AG04449 (cell line): ENCODE measurements at regions of chr11 and their contacts with region 1.

Region 1: GRCh38 chr11:2428322-2428795 is 16.0 kb downstream of the TRPM5 start:
- DNase-seq: no peak
- H3K4me3 ChIP-seq: no peak overlapping the region
- CTCF ChIP-seq: peak; percentile 77

Region 2: GRCh38 chr11:2390725-2391151 is 37.6 kb before region 1 on chr11:
- CTCF ChIA-PET with region 1: no interaction called
- POLR2A ChIA-PET with region 1: no interaction called
- DNase-seq: no peak
- H3K4me3 ChIP-seq: no peak overlapping the region; the same call in 1 of the 2 replicates
- CTCF ChIP-seq: no peak

Region 3: GRCh38 chr11:2892215-2893020 is 464.1 kb after region 1 on chr11:
- CTCF ChIA-PET with region 1: interaction called, 10 read pairs
- POLR2A ChIA-PET with region 1: no interaction called
- DNase-seq: no peak
- H3K4me3 ChIP-seq: peak overlapping the region; percentile 62
- CTCF ChIP-seq: peak; percentile 96